Head of caudate nucleus (tissue), 42 donors: ENCODE measurements at regions of chr6 and their contacts with region 1.

Region 1: GRCh38 chr6:158819213-158819909 is at the start of gene EZR:
- DNase-seq: peak in 37 of 42 donors; percentile 11 to 72 (median 42)

Region 2: DNA sequence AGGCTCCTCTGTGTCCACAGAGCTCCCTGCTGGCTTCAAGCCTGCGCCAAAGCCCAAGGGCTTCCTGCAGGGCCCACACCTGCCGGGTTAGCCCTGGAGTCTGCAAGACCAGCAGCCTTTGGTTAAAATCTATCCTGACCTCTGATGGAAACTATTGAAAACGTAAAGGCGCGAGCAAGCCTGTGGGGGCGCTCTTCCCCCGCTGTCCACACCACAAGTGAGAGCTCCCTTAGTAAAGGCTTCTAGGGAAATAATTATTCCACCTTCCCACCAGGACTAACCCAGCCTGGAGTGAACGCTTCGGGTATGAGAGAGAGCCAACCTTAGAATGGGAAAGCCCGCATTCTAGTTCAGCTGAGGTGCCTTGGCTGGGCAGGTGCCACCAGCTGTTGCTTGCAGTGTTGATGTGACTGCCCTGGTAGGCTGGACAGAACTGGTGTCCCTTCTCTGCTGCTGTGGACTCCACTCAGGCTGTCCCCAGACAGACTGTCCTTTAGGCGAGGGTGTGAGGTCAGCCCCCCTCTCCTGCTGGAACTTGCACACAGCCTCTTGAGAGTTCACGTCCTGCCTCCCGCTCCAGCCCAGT is 100.8 kb before region 1 on chr6:
- intact Hi-C with region 1: loop called (anchors 10 kb)
- DNase-seq: peak in 24 of 42 donors; percentile 10 to 71 (median 28)

Region 3: GRCh38 chr6:158972241-158973233 is 153.2 kb after region 1 on chr6:
- intact Hi-C with region 1: loop called (anchors 10 kb)
- DNase-seq: no peak